ENCODE measurements at regions of chr1 and their contacts with region 1.

Region 1: DNA sequence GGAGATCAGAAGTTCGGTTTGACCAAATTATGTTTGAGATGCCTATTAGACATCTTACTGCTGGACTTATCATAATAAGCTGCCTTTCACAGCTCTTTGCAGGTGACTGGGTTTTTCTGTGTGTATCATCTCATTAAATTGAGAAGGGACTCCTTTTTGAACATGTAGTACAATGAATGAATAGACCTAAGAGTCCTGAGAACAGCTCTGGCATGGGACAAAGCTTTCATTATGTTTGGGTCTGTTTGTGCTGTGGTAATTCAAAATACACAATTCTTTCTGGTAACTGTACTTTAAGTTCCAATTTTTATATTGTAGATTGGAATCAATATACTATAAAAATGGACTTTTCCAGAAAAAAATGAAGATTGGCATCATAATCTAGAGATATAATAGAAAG is 312.3 kb downstream of the TM2D1 start:
- DNase-seq: no peak
- ATAC-seq: no peak
- H3K4me3 ChIP-seq: no peak overlapping the region
- H3K27ac ChIP-seq: no peak overlapping the region
- H3K4me1 ChIP-seq: no peaks in the 10 kb centered on the region
- CTCF ChIP-seq: no peak
- EP300 ChIP-seq: no peak
- POLR2A ChIP-seq: no peak
- RAD21 ChIP-seq: no peak

Region 2: GRCh38 chr1:61326713-61327112 is 85.9 kb before region 1 on chr1:
- CTCF ChIA-PET with region 1: no interaction called
- POLR2A ChIA-PET with region 1: no interaction called
- DNase-seq: no peak
- ATAC-seq: no peak
- H3K4me3 ChIP-seq: no peak overlapping the region
- H3K27ac ChIP-seq: no peak overlapping the region
- H3K4me1 ChIP-seq: peaks cover 37% of the 10 kb centered on the region
- CTCF ChIP-seq: no peak
- EP300 ChIP-seq: no peak
- POLR2A ChIP-seq: no peak
- RAD21 ChIP-seq: no peak

Region 3: DNA sequence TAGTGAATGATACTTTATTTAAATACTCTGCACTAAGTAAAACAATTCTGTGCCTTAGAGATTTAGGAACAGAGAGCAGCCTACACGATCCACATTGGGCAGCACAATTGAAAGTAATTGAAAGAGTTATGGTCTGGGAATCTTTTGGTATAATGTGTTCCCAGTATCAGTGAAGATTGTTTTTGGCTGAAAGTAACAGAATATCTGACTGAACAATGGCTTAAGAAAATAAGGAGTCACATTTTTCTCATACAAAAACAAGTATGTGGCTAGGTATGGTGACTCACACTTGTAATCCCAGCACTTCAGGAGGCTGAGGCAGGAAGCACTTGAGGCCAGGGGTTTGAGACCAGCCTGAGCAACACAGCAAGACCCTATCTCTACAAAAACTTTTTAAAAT is 24.0 kb before region 1 on chr1:
- CTCF ChIA-PET with region 1: no interaction called
- POLR2A ChIA-PET with region 1: no interaction called
- DNase-seq: no peak
- ATAC-seq: no peak
- H3K4me3 ChIP-seq: no peak overlapping the region
- H3K27ac ChIP-seq: no peak overlapping the region
- H3K4me1 ChIP-seq: no peaks in the 10 kb centered on the region
- CTCF ChIP-seq: no peak
- EP300 ChIP-seq: no peak
- POLR2A ChIP-seq: no peak
- RAD21 ChIP-seq: no peak

Region 4: GRCh38 chr1:61515096-61515495 is 102.5 kb after region 1 on chr1:
- CTCF ChIA-PET with region 1: no interaction called
- POLR2A ChIA-PET with region 1: interaction called, 10 read pairs
- DNase-seq: no peak
- ATAC-seq: no peak
- H3K4me3 ChIP-seq: no peak overlapping the region
- H3K27ac ChIP-seq: no peak overlapping the region
- H3K4me1 ChIP-seq: no peaks in the 10 kb centered on the region
- CTCF ChIP-seq: no peak
- EP300 ChIP-seq: no peak
- POLR2A ChIP-seq: no peak
- RAD21 ChIP-seq: no peak